Activated CD8-positive, alpha-beta T cell treated with anti-CD3 and anti-CD28 coated beads, Interleukin-2, amount 10 ng/mL, durations not matched to agents 7 days and 5 days (primary cell): ENCODE measurements at regions of chr11 and their contacts with region 1.

Region 1: DNA sequence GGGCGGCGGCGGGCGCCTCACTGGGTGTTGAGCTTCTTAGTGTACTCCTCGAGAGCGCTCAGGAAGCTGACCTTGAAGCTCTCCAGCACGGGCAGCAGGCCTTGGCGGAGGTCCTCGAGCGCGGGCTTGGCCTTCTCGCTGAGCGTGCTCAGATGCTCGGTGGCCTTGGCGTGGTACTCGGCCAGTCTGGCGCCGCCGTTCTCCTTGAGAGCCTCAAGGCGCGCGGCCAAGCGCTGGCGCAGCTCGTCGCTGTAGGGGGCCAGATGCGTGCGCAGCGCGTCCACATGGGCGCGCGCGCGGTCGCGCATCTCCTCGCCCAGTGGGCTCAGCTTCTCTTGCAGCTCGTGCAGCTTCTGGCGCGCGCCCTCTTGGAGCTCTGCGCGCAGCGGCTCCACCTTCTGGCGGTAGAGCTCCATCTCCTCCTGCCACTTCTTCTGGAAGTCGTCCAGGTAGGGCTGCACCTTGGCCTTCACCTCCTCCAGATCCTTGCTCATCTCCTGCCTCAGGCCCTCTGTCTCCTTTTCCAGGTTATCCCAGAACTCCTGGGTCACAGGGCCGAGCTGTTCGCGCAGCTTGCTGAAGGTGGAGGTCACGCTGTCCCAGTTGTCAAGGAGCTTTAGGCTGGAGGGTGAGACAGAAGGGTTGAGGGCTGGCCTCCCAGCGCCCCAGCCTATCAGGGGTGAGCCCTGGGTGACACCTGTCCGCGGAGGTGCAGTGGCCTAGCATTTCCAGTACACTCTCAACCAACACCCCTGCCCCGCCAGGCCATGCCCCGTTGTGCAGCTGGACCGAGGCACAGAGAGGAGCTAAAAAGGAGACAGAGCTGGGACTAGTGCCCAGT is 1.4 kb downstream of the APOA1 start:
- DNase-seq: peak; percentile 91
- ATAC-seq: peak; percentile 96
- H3K4me3 Mint-ChIP-seq: peak overlapping the region; percentile 73
- H3K27ac Mint-ChIP-seq: peak overlapping the region; percentile 76
- H3K4me1 Mint-ChIP-seq: peaks cover 20% of the 10 kb centered on the region
- H3K27me3 Mint-ChIP-seq: no peaks in the 10 kb centered on the region

Region 2: GRCh38 chr11:116772443-116773202 is 63.4 kb before region 1 on chr11 and contains the start of gene BUD13:
- CTCF ChIA-PET with region 1: interaction called, 28 read pairs
- POLR2A ChIA-PET with region 1: interaction called, 5 read pairs
- DNase-seq: peak; percentile 95
- ATAC-seq: peak; percentile 93
- H3K4me3 Mint-ChIP-seq: peak within 1 kb of the TSS; percentile 97
- H3K27ac Mint-ChIP-seq: peak within 1 kb of the TSS; percentile 97
- H3K4me1 Mint-ChIP-seq: peaks cover 46% of the 10 kb centered on the region
- H3K27me3 Mint-ChIP-seq: no peaks in the 10 kb centered on the region
- total RNA-seq, gene BUD13: 36.3 to 39.5 TPM

Region 3: GRCh38 chr11:116823031-116823843 is 12.8 kb before region 1 on chr11 and contains the start of gene APOA4:
- CTCF ChIA-PET with region 1: interaction called, 16 read pairs
- POLR2A ChIA-PET with region 1: interaction called, 3 read pairs
- DNase-seq: no peak
- ATAC-seq: no peak
- H3K4me3 Mint-ChIP-seq: no peak within 1 kb of the TSS
- H3K27ac Mint-ChIP-seq: no peak within 1 kb of the TSS
- H3K4me1 Mint-ChIP-seq: no peaks in the 10 kb centered on the region
- H3K27me3 Mint-ChIP-seq: no peaks in the 10 kb centered on the region
- total RNA-seq, gene APOA4: not detected

Region 4: DNA sequence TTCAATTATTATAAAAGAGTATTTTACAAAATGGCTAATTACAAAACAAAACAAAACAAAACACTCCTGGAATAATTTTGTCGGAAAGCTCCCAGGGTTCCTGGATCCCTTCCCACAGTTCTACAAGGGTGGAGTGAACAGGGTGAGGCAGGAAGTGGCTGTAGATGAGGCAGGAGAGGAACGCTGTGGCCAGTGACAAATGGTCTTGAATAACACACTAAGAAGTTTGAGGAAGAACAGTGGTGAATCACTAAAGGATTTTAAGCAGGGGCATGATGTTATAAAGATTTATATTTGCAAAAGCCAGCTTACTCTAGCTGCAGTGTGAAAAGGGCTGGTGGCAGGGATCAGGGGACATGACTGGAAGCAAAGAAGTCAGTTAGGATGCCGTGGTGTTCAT is 35.2 kb after region 1 on chr11:
- CTCF ChIA-PET with region 1: interaction called, 21 read pairs
- POLR2A ChIA-PET with region 1: no interaction called
- DNase-seq: no peak
- ATAC-seq: no peak
- H3K4me3 Mint-ChIP-seq: no peak overlapping the region
- H3K27ac Mint-ChIP-seq: no peak overlapping the region
- H3K4me1 Mint-ChIP-seq: peaks cover 6% of the 10 kb centered on the region
- H3K27me3 Mint-ChIP-seq: no peaks in the 10 kb centered on the region

Region 5: GRCh38 chr11:116927163-116927974 is 91.4 kb after region 1 on chr11:
- CTCF ChIA-PET with region 1: interaction called, 10 read pairs
- POLR2A ChIA-PET with region 1: no interaction called
- DNase-seq: peak; percentile 66
- ATAC-seq: peak; percentile 28
- H3K4me3 Mint-ChIP-seq: peak overlapping the region; percentile 48
- H3K27ac Mint-ChIP-seq: peak overlapping the region; percentile 73
- H3K4me1 Mint-ChIP-seq: peaks cover 82% of the 10 kb centered on the region
- H3K27me3 Mint-ChIP-seq: no peaks in the 10 kb centered on the region

Region 6: GRCh38 chr11:117178210-117179034 is 342.4 kb after region 1 on chr11 and contains the start of gene SIDT2:
- CTCF ChIA-PET with region 1: interaction called, 10 read pairs
- POLR2A ChIA-PET with region 1: no interaction called
- DNase-seq: peak; percentile 95
- ATAC-seq: peak; percentile 98
- H3K4me3 Mint-ChIP-seq: peak within 1 kb of the TSS; percentile 91
- H3K27ac Mint-ChIP-seq: peak within 1 kb of the TSS; percentile 88
- H3K4me1 Mint-ChIP-seq: peaks cover 36% of the 10 kb centered on the region
- H3K27me3 Mint-ChIP-seq: no peaks in the 10 kb centered on the region
- total RNA-seq, gene SIDT2: 20.2 to 23.6 TPM